Heart right ventricle (tissue), 16 donors: ENCODE measurements at regions of chr22 and their contacts with region 1.

Region 1: GRCh38 chr22:21031971-21032867 is at the start of gene SLC7A4:
- DNase-seq: no peak
- ATAC-seq: peak in 5 of 8 donors; percentile 19 to 48 (median 41)
- H3K4me3 ChIP-seq: peak within 1 kb of the TSS in 9 of 10 donors; percentile 18 to 49 (median 42)
- H3K27ac ChIP-seq: no peak within 1 kb of the TSS
- H3K4me1 ChIP-seq: peaks cover 3 to 17% (median 8%) of the 10 kb centered on the region in 9 donors
- H3K27me3 ChIP-seq: peaks cover 8 to 47% (median 39%) of the 10 kb centered on the region in 7 donors
- CTCF ChIP-seq: no peak
- total RNA-seq, gene SLC7A4: 0.14 to 0.78 (median 0.20) TPM in 4 of 10 donors, not detected in the others

Region 2: GRCh38 chr22:20583471-20583922 is 448.7 kb before region 1 on chr22:
- intact Hi-C with region 1: no loop called
- DNase-seq: peak; percentile 44 to 58
- ATAC-seq: peak in 7 of 8 donors; percentile 9 to 53 (median 41)
- H3K4me3 ChIP-seq: no peak overlapping the region
- H3K27ac ChIP-seq: no peak overlapping the region
- H3K4me1 ChIP-seq: peaks cover 0 to 12% (median 5%) of the 10 kb centered on the region in 9 donors
- H3K27me3 ChIP-seq: no peaks in the 10 kb centered on the region
- CTCF ChIP-seq: no peak

Region 3: DNA sequence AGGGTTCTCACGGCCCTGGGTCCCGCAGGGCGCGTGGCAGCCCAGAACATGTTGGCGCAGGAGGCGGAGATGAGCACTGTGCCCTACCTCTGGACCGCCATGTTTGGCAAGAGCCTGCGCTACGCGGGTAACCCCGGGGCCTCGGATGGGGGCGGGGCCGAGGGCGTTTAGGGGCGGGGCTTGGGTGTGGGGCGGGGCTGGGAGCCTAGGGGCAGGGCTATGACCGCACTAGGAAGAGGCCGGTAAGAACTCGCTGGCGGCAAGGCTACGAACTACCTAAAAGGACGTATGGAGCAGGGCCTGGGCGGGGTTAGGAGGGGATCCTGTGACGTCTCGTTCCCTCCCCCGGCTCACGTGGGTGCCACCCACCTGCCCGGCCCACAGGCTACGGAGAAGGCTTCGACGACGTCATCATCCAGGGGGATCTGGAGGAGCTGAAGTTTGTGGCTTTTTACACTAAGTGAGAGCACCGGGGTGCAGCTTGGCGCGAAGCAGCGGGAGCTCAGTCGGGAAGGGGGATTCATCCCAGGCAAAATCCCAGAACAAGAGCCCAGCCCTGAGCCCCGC is 52.9 kb before region 1 on chr22:
- intact Hi-C with region 1: no loop called
- DNase-seq: peak; percentile 56 to 60
- ATAC-seq: peak in 7 of 8 donors; percentile 10 to 64 (median 31)
- H3K4me3 ChIP-seq: peak overlapping the region in 9 of 10 donors; percentile 15 to 41 (median 31)
- H3K27ac ChIP-seq: peak overlapping the region in 1 of 10 donors; percentile 3
- H3K4me1 ChIP-seq: peaks cover 20 to 42% (median 34%) of the 10 kb centered on the region in 9 donors
- H3K27me3 ChIP-seq: no peaks in the 10 kb centered on the region
- CTCF ChIP-seq: no peak

Region 4: DNA sequence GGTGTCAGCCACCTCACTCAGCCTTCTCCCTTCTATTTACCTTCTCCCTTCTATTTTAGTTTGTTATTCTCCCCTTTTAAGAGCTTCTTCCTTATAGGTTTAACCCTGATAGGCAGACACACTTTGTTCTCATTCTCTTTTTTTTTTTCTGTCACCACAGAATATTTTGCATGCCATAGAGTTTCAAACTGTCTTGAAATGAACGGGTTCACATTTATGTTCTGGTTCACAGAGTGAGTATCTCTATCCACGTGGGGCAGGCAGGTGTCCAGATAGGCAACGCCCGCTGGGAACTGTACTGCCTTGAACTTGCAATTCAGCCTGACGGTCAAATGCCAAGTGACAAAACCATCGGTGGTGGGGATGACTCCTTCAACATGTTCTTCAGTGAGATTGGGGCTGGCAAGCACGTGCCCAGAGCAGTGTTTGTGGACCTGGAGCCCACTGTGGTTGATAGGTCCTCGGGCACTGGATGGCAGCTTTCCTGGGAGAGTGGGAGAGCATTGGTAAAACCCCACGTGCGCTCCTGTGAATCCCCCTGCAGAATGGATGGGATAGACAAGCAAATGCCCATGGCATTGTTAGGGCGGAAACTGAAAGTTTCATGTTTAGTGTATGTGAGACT is 33.1 kb after region 1 on chr22:
- intact Hi-C with region 1: loop called in 1 of 10 experiments (anchors 2 kb)
- DNase-seq: no peak
- ATAC-seq: peak in 1 of 8 donors; percentile 44
- H3K4me3 ChIP-seq: no peak overlapping the region
- H3K27ac ChIP-seq: no peak overlapping the region
- H3K4me1 ChIP-seq: no peaks in the 10 kb centered on the region
- H3K27me3 ChIP-seq: no peaks in the 10 kb centered on the region
- CTCF ChIP-seq: no peak

Region 5: DNA sequence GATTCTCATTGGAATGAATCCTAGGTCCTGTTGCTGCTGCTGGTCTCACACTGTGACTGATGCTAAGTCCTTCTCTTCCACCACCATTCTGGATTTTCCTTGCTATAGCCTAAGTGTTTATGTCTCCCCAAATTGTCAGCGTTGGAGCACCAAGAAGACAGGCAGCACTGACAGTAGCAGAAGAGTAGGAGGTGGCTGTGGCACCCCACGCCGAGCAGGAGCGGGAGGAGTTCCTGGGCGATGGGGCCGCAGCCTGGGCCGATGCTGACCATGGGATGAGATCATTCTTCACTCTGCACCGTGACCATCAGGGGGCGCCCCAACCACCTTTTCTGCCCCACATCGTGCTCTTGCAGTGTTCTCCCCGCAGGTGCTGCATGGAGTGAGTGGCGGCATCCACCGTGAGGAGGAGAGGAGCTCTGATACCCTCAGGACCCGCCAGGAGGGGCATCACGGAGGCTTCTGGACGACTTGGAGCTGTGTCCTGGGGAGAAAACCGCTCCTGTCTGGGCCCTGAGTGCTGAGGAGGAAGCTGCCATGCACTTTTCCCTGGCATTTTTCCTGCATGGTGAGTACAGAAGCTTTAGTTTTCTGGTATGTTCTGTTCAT is 70.5 kb after region 1 on chr22:
- intact Hi-C with region 1: loop called in 2 of 10 experiments (anchors 10 kb)
- DNase-seq: peak; percentile 48 to 72
- ATAC-seq: peak; percentile 70 to 92 (median 76)
- H3K4me3 ChIP-seq: no peak overlapping the region
- H3K27ac ChIP-seq: no peak overlapping the region
- H3K4me1 ChIP-seq: peaks cover 0 to 7% (median 5%) of the 10 kb centered on the region in 9 donors
- H3K27me3 ChIP-seq: peaks cover 0 to 47% (median 21%) of the 10 kb centered on the region in 7 donors
- CTCF ChIP-seq: peak; percentile 45 to 87 (median 79)